T-cell (primary cell): ENCODE measurements at regions of chr2 and their contacts with region 1.

Region 1: DNA sequence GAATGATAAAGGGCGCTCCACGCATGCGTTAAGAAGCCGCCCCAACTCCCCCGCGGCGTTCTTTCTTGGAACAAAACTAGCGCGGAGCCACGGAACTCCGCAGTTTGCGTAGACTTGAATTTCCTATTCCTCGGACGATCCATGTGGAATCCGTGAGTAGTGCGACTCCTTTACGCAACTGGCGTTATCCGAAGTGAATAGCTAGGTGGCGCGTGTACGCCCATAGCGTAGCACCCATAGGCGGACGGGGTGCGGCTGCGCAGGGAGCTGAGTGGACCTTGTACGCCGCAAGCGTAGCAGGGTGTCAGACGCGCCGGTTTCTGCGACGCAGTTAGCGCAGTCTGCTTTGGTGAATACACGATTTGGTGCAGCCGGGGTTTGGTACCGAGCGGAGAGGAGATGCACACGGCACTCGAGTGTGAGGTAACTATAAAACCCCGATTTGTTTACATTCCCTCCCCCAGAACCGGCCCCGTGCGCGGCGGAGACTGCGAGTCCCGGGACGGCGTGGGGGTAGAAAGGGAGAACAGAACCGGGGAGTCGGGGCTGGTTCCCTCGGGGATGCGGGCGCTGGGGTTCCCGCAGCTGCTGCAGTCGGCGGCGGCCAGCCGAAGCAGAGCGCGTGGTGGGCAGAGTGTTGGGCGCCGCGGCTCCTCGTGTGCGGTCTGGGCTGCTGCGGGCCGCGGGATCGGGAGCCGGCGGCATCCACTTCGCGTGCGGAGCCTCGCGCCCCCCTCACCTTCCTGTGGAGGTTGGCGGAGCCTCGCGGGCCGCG is at the start of gene SLC39A10:
- DNase-seq: peak; percentile 92 to 100 (median 97)
- ATAC-seq: peak; percentile 73 to 88 (median 76)
- H3K4me3 ChIP-seq: peak within 1 kb of the TSS; percentile 73 to 89
- H3K4me3 Mint-ChIP-seq: peak within 1 kb of the TSS; percentile 87 to 99 (median 97)
- H3K27ac ChIP-seq: peak within 1 kb of the TSS; percentile 91
- H3K27ac Mint-ChIP-seq: peak within 1 kb of the TSS; percentile 100
- H3K4me1 ChIP-seq: peaks cover 12 to 14% of the 10 kb centered on the region in 2 experiments
- H3K4me1 Mint-ChIP-seq: peaks cover 26 to 49% (median 29%) of the 10 kb centered on the region in 3 donors
- H3K27me3 ChIP-seq: no peaks in the 10 kb centered on the region
- H3K27me3 Mint-ChIP-seq: peaks cover 0 to 4% of the 10 kb centered on the region in 2 donors
- total RNA-seq, gene SLC39A10: 49.8 to 81.7 (median 79.5) TPM

Region 2: GRCh38 chr2:195442458-195443175 is 214.4 kb before region 1 on chr2:
- CTCF ChIA-PET with region 1: no interaction called
- POLR2A ChIA-PET with region 1: no interaction called
- DNase-seq: no peak
- ATAC-seq: no peak
- H3K4me3 ChIP-seq: no peak overlapping the region
- H3K4me3 Mint-ChIP-seq: no peak overlapping the region
- H3K27ac ChIP-seq: no peak overlapping the region
- H3K27ac Mint-ChIP-seq: no peak overlapping the region
- H3K4me1 ChIP-seq: no peaks in the 10 kb centered on the region
- H3K4me1 Mint-ChIP-seq: no peaks in the 10 kb centered on the region
- H3K27me3 ChIP-seq: peaks cover 0 to 8% of the 10 kb centered on the region in 2 experiments
- H3K27me3 Mint-ChIP-seq: no peaks in the 10 kb centered on the region

Region 3: GRCh38 chr2:195498176-195498575 is 158.9 kb before region 1 on chr2:
- CTCF ChIA-PET with region 1: interaction called, 35 to 110 read pairs
- POLR2A ChIA-PET with region 1: interaction called, 4 to 6 read pairs
- DNase-seq: peak; percentile 5 to 76 (median 57)
- ATAC-seq: peak; percentile 59 to 80 (median 70)
- H3K4me3 ChIP-seq: no peak overlapping the region
- H3K4me3 Mint-ChIP-seq: no peak overlapping the region
- H3K27ac ChIP-seq: no peak overlapping the region
- H3K27ac Mint-ChIP-seq: peak overlapping the region; percentile 11
- H3K4me1 ChIP-seq: no peaks in the 10 kb centered on the region
- H3K4me1 Mint-ChIP-seq: peaks cover 45 to 52% (median 45%) of the 10 kb centered on the region in 3 donors
- H3K27me3 ChIP-seq: no peaks in the 10 kb centered on the region
- H3K27me3 Mint-ChIP-seq: no peaks in the 10 kb centered on the region

Region 4: DNA sequence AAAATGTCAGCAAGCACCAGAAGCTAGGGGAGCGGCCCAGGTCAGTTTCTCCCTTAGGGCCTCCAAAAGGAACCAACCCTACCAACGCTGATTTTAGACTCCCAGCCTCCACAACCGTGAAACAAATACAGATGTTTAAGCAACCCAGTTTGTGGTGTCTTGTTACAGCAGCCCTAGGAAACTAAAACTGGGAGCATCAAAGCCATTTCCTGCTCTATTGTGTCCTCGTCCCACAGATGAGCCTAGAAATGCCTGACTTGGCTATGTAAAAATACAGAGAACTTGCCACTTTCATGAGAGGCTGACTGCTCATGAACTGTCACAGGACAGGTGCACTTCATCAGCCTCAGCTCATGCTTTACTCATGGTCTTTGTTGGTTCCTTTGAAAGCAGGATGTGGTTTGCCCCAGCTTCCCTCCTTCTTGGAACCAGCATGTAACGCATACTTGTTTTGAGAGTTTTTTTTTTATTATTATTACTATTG is 97.6 kb before region 1 on chr2:
- CTCF ChIA-PET with region 1: interaction called, 8 to 52 read pairs
- POLR2A ChIA-PET with region 1: interaction called, 6 to 22 read pairs
- DNase-seq: peak; percentile 41 to 91 (median 76)
- ATAC-seq: peak; percentile 90 to 96 (median 92)
- H3K4me3 ChIP-seq: no peak overlapping the region
- H3K4me3 Mint-ChIP-seq: peak overlapping the region; percentile 43 to 64 (median 61)
- H3K27ac ChIP-seq: peak overlapping the region; percentile 87
- H3K27ac Mint-ChIP-seq: peak overlapping the region; percentile 98
- H3K4me1 ChIP-seq: peaks cover 51 to 66% of the 10 kb centered on the region in 2 experiments
- H3K4me1 Mint-ChIP-seq: peaks cover 57 to 75% (median 72%) of the 10 kb centered on the region in 3 donors
- H3K27me3 ChIP-seq: no peaks in the 10 kb centered on the region
- H3K27me3 Mint-ChIP-seq: no peaks in the 10 kb centered on the region

Region 5: DNA sequence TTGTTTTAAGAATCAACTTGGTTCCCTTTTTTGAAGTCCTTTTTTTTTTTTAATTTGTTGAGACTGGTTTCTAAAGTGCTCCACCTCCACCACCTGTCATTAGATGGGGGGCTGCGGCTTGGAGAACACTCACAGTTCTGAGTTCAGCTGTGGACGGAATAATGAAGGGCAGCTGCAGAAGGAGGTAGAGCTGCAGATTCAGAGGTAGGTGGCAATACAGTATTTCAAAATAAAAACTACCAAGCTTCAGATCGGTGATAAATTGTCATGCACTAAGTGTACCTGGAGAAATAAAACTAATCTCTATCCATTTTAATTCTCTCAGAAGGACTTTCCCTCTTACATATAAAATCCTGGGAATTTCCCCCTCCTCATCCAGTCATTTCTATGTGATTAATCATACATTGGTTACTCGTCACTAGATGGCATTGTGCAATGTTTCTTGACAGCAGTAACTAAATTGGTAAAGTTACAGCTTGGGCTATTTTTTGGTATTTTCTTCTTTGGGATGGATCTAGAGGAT is 81.1 kb before region 1 on chr2:
- CTCF ChIA-PET with region 1: interaction called, 7 to 31 read pairs
- POLR2A ChIA-PET with region 1: interaction called, 4 to 5 read pairs
- DNase-seq: peak in 2 of 35 experiments; percentile 17 to 49
- ATAC-seq: peak in 3 of 4 experiments; percentile 60 to 66 (median 60)
- H3K4me3 ChIP-seq: no peak overlapping the region
- H3K4me3 Mint-ChIP-seq: peak overlapping the region; percentile 0 to 63 (median 59)
- H3K27ac ChIP-seq: peak overlapping the region; percentile 39
- H3K27ac Mint-ChIP-seq: peak overlapping the region; percentile 88 to 92
- H3K4me1 ChIP-seq: peaks cover 21 to 23% of the 10 kb centered on the region in 2 experiments
- H3K4me1 Mint-ChIP-seq: peaks cover 72 to 84% (median 75%) of the 10 kb centered on the region in 3 donors
- H3K27me3 ChIP-seq: no peaks in the 10 kb centered on the region
- H3K27me3 Mint-ChIP-seq: no peaks in the 10 kb centered on the region

Region 6: DNA sequence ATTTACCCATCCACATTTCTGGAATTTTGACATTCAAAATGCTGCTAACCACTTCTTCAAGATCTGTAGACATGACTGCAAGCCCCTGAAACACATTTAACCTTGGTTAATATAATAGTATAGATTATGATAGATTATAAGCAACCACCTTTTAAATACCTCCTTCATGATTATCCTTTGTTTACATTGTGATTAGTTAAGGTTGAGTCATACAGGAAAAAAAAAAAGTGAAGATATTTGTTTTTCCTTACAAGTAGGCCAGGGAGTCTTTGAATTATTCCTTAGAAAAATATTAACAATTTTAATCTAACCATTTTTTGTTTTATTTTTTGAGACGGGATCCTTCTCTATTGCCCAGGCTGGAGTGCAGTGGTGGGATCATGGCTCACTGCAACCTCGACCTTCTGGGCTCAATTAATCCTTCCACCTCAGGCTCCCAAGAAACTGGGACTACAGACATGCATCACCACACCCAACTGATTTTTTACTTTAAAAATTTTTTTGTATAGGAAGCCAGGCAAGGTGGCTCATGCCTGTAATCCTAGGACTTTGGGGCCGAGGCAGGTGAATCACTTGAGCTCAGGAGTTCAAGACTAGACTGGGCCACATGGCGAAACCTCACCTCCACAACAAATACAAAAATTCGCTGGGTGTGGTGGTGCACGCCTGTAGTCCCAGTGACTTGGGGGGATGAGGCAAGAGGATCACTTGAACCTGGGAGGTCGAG is 99.3 kb after region 1 on chr2:
- CTCF ChIA-PET with region 1: no interaction called
- POLR2A ChIA-PET with region 1: no interaction called
- DNase-seq: no peak
- ATAC-seq: no peak
- H3K4me3 ChIP-seq: no peak overlapping the region
- H3K4me3 Mint-ChIP-seq: no peak overlapping the region
- H3K27ac ChIP-seq: no peak overlapping the region
- H3K27ac Mint-ChIP-seq: no peak overlapping the region
- H3K4me1 ChIP-seq: no peaks in the 10 kb centered on the region
- H3K4me1 Mint-ChIP-seq: no peaks in the 10 kb centered on the region
- H3K27me3 ChIP-seq: peaks cover 0 to 3% of the 10 kb centered on the region in 2 experiments
- H3K27me3 Mint-ChIP-seq: no peaks in the 10 kb centered on the region

Region 7: DNA sequence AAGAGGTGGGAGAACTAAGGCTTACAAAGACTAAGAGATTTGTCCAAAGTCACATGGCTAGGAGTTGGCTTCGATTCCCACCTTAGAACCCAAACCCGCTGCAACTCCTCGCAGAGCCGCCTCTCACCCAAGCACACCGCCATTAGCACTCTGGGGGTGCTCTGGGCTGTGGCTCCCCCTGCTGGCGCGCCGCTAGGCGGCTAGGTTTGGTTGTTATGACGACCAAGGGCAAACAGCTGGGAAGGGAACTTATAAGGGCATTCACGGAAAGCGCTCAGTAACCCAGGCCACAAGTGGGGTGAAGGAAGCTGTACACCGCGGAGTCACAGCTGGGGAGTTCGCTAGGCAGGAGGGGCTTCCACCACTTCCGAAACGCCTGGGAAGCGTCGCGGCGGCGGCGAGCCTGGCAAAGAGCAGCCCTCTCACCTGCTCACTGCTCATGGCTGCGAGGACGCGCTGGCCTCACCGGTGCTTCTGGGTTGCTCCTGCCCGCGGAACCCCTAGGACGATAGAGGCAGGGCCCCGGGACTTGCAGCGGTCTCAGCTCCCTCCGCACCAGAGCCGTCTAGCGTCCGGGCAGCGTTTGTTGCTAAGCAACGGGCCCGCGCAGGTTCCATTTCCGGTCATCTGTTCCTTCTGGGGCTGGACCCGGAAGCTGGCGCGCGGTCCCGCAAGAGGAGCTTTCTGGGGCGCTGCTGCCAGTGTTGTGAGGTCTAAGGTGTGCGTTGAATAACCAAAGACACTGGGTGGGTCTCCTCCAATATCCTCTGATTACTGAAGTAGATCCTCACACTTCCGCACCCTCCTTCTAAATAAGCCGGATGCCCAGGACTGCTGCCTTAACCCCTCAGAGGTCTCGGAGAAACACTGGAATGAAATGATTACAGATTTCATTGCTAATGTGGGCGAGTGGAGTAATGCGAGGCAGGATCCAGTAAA is 411.5 kb after region 1 on chr2 and contains the start of gene DNAH7:
- CTCF ChIA-PET with region 1: interaction called, 6 to 14 read pairs
- POLR2A ChIA-PET with region 1: no interaction called
- DNase-seq: peak; percentile 80 to 94 (median 92)
- ATAC-seq: peak; percentile 89 to 97 (median 93)
- H3K4me3 ChIP-seq: peak within 1 kb of the TSS; percentile 60 to 64
- H3K4me3 Mint-ChIP-seq: peak within 1 kb of the TSS; percentile 81 to 85 (median 82)
- H3K27ac ChIP-seq: peak within 1 kb of the TSS; percentile 51
- H3K27ac Mint-ChIP-seq: peak within 1 kb of the TSS; percentile 71 to 79
- H3K4me1 ChIP-seq: peaks cover 0 to 14% of the 10 kb centered on the region in 2 experiments
- H3K4me1 Mint-ChIP-seq: peaks cover 13 to 16% (median 14%) of the 10 kb centered on the region in 3 donors
- H3K27me3 ChIP-seq: peaks cover 0 to 4% of the 10 kb centered on the region in 2 experiments
- H3K27me3 Mint-ChIP-seq: peaks cover 0 to 4% of the 10 kb centered on the region in 2 donors
- total RNA-seq, gene DNAH7: 0.03 TPM in 1 of 5 donors, not detected in the others

Region 8: GRCh38 chr2:196155575-196155974 is 498.5 kb after region 1 on chr2:
- CTCF ChIA-PET with region 1: no interaction called
- POLR2A ChIA-PET with region 1: no interaction called
- DNase-seq: no peak
- ATAC-seq: peak in 3 of 4 experiments; percentile 18 to 41 (median 33)
- H3K4me3 ChIP-seq: no peak overlapping the region
- H3K4me3 Mint-ChIP-seq: peak overlapping the region in 2 of 3 donors; percentile 5 to 99
- H3K27ac ChIP-seq: peak overlapping the region; percentile 14
- H3K27ac Mint-ChIP-seq: peak overlapping the region; percentile 94 to 96
- H3K4me1 ChIP-seq: peaks cover 35 to 70% of the 10 kb centered on the region in 2 experiments
- H3K4me1 Mint-ChIP-seq: peaks cover 83 to 89% (median 89%) of the 10 kb centered on the region in 3 donors
- H3K27me3 ChIP-seq: no peaks in the 10 kb centered on the region
- H3K27me3 Mint-ChIP-seq: no peaks in the 10 kb centered on the region